ENCODE measurements at regions of chr16 and their contacts with region 1.

Region 1: GRCh38 chr16:51008607-51009006 is 142.5 kb downstream of the SALL1 start:
- DNase-seq: no peak
- H3K4me3 ChIP-seq: no peak overlapping the region
- H3K4me3 Mint-ChIP-seq: no peak overlapping the region
- H3K27ac Mint-ChIP-seq: no peak overlapping the region
- H3K4me1 ChIP-seq: peaks cover 10% of the 10 kb centered on the region
- H3K4me1 Mint-ChIP-seq: peaks cover 13% of the 10 kb centered on the region
- H3K27me3 ChIP-seq: no peaks in the 10 kb centered on the region
- H3K27me3 Mint-ChIP-seq: peaks cover 8% of the 10 kb centered on the region
- CTCF ChIP-seq: no peak

Region 2: GRCh38 chr16:50974438-50975036 is 34.1 kb before region 1 on chr16:
- CTCF ChIA-PET with region 1: no interaction called
- POLR2A ChIA-PET with region 1: no interaction called
- intact Hi-C with region 1: loop called (anchors 1 kb)
- DNase-seq: no peak
- H3K4me3 ChIP-seq: no peak overlapping the region
- H3K4me3 Mint-ChIP-seq: no peak overlapping the region
- H3K27ac Mint-ChIP-seq: no peak overlapping the region
- H3K4me1 ChIP-seq: no peaks in the 10 kb centered on the region; the same call in 1 of the 2 replicates
- H3K4me1 Mint-ChIP-seq: no peaks in the 10 kb centered on the region
- H3K27me3 ChIP-seq: no peaks in the 10 kb centered on the region
- H3K27me3 Mint-ChIP-seq: peaks cover 27% of the 10 kb centered on the region
- CTCF ChIP-seq: no peak

Region 3: DNA sequence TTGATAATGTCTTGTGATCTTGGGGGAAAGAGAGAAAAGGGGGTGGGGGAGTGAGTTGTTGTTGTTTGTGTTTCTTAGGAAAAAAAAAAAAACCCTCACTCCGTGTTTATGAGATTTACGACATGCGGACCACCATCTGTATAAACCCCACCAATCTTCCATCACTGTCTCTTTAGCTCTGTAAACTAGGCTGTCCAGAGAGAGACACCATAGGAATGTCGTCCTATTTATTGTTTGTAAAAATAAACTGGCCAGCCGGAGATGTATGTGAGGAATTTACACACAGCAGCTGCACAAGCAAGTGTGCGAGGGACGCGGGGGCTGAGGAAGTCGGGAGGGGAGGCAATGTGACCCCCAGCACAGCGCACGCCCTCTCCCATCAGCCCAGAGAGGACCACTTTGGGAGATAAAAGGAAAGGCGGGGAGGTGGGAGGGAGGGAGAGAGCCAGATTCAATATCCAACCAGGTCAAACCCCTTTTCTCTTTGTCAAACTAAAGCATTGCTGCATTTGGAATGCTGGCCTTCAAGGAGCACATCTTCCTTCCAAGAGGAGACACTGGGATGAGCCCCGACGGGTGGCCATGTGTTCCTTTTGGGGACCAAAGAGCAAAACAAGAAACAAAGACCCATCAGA is 278.6 kb after region 1 on chr16:
- CTCF ChIA-PET with region 1: no interaction called
- POLR2A ChIA-PET with region 1: no interaction called
- intact Hi-C with region 1: no loop called
- DNase-seq: no peak
- H3K4me3 ChIP-seq: no peak overlapping the region
- H3K4me3 Mint-ChIP-seq: no peak overlapping the region
- H3K27ac Mint-ChIP-seq: no peak overlapping the region
- H3K4me1 ChIP-seq: no peaks in the 10 kb centered on the region
- H3K4me1 Mint-ChIP-seq: no peaks in the 10 kb centered on the region
- H3K27me3 ChIP-seq: no peaks in the 10 kb centered on the region
- H3K27me3 Mint-ChIP-seq: peaks cover 6% of the 10 kb centered on the region
- CTCF ChIP-seq: no peak